Activated naive CD4-positive, alpha-beta T cell treated with anti-CD3 and anti-CD28 coated beads, Interleukin-2, amount 10 ng/mL, durations not matched to agents 7 days and 5 days (primary cell): ENCODE measurements at regions of chr9 and their contacts with region 1.

Region 1: DNA sequence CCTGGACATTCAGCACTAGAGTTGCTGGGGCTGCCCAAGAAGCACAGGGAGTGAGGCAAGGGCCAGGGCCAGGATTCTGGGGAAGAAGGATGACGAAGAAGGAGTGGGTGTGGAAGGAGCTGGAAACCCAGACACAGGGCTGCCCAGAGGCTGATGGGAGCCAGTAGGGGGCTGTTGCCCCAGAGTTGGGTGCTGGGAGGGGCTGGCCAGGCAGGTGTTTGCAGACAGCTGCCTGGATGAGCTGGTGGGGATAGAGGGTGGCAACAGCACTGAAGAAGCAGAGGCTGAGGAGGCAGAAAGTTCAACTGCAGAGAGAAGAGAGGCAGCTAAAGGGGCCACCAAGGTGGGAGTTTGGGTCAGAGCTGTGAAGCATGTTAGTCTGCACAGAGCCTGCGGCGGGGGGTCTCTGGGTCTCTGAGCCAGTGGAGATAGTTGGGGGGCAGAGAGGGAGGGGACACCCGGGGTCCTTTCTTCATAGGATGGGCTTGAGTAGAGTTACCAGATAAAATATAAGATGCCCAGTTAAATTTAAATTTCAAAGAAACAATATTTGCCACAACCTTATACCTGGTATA is 2.5 kb upstream of the AQP7 start:
- DNase-seq: no peak
- H3K4me3 Mint-ChIP-seq: no peak overlapping the region
- H3K27ac Mint-ChIP-seq: no peak overlapping the region
- H3K4me1 Mint-ChIP-seq: peaks cover 23% of the 10 kb centered on the region
- H3K27me3 Mint-ChIP-seq: peaks cover 27% of the 10 kb centered on the region

Region 2: DNA sequence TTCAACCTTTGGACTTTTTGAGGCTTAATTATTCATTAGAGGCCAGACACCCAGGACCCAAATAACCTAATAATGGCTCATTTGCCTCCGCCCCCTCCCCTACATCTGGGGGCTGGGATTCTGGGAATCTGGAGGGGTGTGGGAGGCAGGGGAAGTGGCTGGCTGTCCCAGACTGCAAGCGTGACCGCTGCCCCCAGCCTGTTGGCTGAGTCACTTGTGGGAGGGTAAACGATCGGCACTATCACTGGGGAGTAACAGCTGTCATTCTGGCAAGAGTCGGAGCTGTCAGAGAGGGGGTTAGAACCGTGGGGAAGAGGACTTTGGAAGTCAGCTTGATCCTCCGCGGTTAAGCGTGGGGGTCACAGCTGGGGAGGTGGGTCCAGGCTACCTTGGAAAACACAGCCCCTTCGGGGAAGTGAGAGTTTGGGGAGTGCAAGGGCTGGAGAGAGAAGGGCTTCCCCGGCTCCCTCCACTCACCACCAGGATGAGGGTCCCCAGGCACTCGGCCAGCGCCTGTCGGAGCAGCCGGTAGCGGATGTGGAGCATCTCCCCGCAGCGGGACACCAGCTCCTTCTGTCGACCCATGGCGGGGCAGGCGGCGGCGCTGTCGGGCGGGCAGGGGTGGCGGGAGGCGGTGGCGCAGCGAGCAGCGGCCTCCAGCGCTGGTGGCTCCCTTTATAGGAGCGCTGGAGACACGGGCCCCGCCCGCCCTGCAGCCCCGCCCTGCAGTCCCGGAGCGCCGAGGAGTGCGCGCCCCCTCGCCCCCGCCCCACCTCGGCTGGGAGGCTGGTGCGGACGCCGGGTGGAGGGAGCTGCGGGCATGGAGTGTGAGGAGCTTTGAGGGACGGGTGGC is 42.3 kb after region 1 on chr9 and contains the start of gene AQP3:
- CTCF ChIA-PET with region 1: interaction called, 193 read pairs
- DNase-seq: peak; percentile 91
- H3K4me3 Mint-ChIP-seq: peak within 1 kb of the TSS; percentile 91
- H3K27ac Mint-ChIP-seq: peak within 1 kb of the TSS; percentile 97
- H3K4me1 Mint-ChIP-seq: peaks cover 68% of the 10 kb centered on the region
- H3K27me3 Mint-ChIP-seq: no peaks in the 10 kb centered on the region

Region 3: GRCh38 chr9:33452828-33453271 is 48.0 kb after region 1 on chr9:
- CTCF ChIA-PET with region 1: interaction called, 193 read pairs
- DNase-seq: peak; percentile 68
- H3K4me3 Mint-ChIP-seq: no peak overlapping the region
- H3K27ac Mint-ChIP-seq: peak overlapping the region; percentile 90
- H3K4me1 Mint-ChIP-seq: peaks cover 76% of the 10 kb centered on the region
- H3K27me3 Mint-ChIP-seq: no peaks in the 10 kb centered on the region

Region 4: GRCh38 chr9:33466565-33467495 is 62.0 kb after region 1 on chr9:
- CTCF ChIA-PET with region 1: interaction called, 134 read pairs
- DNase-seq: peak; percentile 84
- H3K4me3 Mint-ChIP-seq: no peak overlapping the region
- H3K27ac Mint-ChIP-seq: peak overlapping the region; percentile 42
- H3K4me1 Mint-ChIP-seq: peaks cover 9% of the 10 kb centered on the region
- H3K27me3 Mint-ChIP-seq: no peaks in the 10 kb centered on the region

Region 5: DNA sequence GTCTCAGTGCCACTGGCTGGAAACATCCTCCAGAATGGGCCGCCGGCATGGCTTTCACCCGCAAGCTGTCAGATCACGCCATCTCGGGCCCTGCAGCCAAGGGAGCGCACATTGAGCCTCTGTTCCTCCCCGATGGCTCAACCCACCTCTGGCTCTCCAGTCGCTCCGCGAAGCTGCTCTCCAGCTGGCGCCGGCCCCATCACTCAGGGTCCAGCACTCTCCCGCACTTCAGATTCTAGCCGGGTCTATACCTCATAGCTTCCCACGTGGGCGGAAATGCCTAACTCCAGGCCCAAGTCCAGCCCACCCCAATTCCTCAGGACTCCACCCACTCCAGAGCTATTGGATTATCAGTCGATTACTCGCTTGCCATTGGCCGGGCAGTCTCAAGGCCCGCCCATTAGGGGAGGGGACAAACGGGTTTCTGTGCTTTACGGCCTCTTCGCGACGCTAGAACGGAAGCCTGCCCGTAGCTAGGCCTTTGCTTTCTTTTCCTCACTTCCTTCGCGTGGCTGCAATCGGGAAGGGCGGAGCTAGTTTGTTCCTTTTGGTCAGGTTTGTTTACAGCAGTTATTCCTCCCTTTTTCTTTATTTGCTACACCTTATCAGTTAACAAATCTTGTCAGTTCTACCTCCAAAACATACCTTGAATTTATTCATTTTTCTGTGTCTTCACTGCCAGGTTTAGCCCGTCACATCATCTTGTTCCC is 68.9 kb after region 1 on chr9 and contains the start of gene NOL6:
- CTCF ChIA-PET with region 1: interaction called, 13 read pairs
- DNase-seq: peak; percentile 99
- H3K4me3 Mint-ChIP-seq: peak within 1 kb of the TSS; percentile 96
- H3K27ac Mint-ChIP-seq: peak within 1 kb of the TSS; percentile 93
- H3K4me1 Mint-ChIP-seq: peaks cover 30% of the 10 kb centered on the region
- H3K27me3 Mint-ChIP-seq: no peaks in the 10 kb centered on the region